Astrocyte of the cerebellum (primary cell): ENCODE measurements at regions of chr12 and their contacts with region 1.

Region 1: GRCh38 chr12:24991209-24992049 is 42.5 kb upstream of the BCAT1 start:
- DNase-seq: peak; percentile 33
- H3K4me3 ChIP-seq: no peak overlapping the region
- CTCF ChIP-seq: peak; percentile 28

Region 2: GRCh38 chr12:25041006-25041741 is 49.7 kb after region 1 on chr12:
- in situ Hi-C with region 1: no loop called
- DNase-seq: no peak
- H3K4me3 ChIP-seq: no peak overlapping the region
- CTCF ChIP-seq: no peak

Region 3: DNA sequence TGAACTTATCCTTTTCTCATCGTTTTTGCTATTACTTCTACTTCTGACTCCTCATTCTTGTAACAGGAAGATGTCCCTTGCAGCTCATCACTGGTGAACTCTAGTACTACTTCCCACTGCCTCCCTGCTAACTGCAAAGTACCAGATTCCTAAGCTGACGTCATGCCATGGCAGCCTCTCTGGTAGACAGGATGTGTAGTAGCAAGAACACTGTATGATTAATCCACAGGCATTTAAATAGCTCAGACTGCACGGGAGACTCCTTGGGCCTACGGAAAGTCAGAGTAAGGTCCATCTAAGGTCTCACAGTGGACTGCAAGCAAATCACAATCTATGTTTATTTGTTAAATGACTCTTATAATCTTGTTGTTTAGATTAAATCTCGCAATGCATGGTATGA is 160.0 kb after region 1 on chr12:
- in situ Hi-C with region 1: loop called (anchors 10 kb)
- DNase-seq: peak; percentile 94
- H3K4me3 ChIP-seq: no peak overlapping the region
- CTCF ChIP-seq: no peak